HCT116 (cell line): ENCODE measurements at regions of chr10 and their contacts with region 1.

Region 1: DNA sequence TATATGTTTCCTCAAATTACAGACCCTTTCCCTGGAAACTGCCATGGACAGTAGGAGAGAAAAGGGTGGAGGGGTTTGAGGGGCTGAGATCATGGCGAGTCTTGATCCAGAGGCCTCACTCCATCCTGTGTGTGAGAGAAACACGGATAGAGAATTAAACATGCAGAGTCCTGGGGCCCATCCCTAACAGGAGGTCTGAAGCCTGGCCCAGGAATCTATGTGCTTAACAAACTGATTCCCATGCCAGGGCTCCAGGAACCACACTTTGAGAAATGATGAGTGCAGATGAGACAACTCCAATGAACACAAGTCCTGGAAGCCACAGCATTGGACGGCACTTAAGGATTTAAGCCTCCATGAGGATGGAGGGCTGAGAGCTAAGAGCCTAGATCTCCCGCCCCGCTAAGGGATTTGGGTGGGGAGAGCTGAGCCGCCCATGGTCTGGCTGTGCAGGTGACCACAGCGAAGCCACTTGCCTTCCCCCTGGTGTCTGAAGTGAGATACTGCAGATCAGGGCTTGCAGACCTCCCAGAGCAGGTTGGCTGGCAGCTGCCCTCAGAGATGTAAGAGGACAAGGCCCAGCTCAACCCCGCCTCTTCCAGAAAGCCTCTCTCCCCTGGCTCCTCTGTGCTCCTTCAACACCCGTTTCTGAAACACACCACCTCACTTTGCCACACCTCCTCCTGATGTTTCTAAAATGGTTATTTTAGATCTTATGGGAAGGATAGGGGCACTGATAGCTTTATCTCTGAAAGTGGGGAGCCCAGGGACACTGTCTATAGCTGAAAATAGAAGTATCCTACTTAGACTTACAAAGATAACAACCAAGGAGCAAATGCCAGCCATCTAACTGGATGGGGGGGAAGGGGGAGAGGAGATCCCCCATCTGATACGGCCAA is 24.8 kb upstream of the EIF5AL1 start:
- DNase-seq: peak; percentile 81
- ATAC-seq: peak; percentile 90
- H3K4me3 ChIP-seq: peak overlapping the region in 1 of 2 experiments; percentile 37; a peak in 2 of 4 replicates
- H3K27ac ChIP-seq: peak overlapping the region; percentile 47
- H3K4me1 ChIP-seq: peaks cover 26 to 40% of the 10 kb centered on the region in 2 experiments
- H3K27me3 ChIP-seq: no peaks in the 10 kb centered on the region
- CTCF ChIP-seq: peak; percentile 81 to 86 (median 84)
- POLR2A ChIP-seq: no peak
- RAD21 ChIP-seq: peak; percentile 77

Region 2: GRCh38 chr10:79298403-79299244 is 188.9 kb before region 1 on chr10:
- CTCF ChIA-PET with region 1: no interaction called
- POLR2A ChIA-PET with region 1: no interaction called
- RAD21 ChIA-PET with region 1: no interaction called
- intact Hi-C with region 1: loop called (anchors 5 kb)
- DNase-seq: peak; percentile 53
- ATAC-seq: peak; percentile 84
- H3K4me3 ChIP-seq: peak overlapping the region in 1 of 2 experiments; percentile 35; a peak in 2 of 4 replicates
- H3K27ac ChIP-seq: peak overlapping the region; percentile 38
- H3K4me1 ChIP-seq: peaks cover 18 to 39% of the 10 kb centered on the region in 2 experiments
- H3K27me3 ChIP-seq: no peaks in the 10 kb centered on the region
- CTCF ChIP-seq: no peak
- POLR2A ChIP-seq: no peak
- RAD21 ChIP-seq: no peak

Region 3: DNA sequence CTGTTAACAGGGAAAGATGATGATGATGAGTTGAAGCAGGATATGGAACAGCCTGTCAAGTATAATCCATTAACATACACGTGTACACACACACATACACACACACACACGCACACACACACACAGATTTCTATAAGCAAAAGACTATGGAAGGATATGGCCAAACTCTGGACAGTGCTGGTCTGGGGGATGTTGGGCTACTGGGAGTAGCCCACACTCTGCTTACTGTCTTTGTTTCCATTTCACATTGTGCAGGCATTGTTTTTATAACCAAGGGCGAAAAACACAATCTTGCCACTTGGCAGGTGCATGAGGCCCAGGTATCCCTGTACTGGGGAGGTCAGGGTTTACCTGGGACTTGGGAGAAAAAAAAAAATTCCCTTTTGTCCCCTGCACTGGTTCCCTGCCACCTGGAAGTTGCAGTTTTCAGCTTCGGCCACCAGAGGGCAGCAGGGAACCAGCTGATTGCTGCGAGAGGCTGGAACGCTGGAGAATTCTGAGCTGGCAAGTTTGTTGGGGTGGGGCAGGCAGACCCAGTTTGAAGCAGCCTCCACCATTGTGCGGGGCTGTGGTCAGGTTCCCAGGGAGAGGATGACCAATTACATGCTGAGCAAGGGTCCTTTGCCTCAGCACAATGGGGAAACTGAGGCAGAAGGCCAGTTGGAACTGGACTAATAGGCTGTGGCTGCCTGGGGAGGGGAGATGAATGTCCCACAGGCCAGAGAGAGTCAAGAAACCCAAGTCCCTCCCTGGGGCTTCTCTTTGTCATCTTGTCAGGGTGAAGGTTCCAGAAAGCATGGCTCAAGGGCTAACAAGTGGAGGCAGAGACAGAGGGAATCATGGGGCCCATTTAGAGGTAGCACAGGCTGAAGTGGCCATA is 113.0 kb before region 1 on chr10:
- CTCF ChIA-PET with region 1: interaction called, 77 read pairs
- POLR2A ChIA-PET with region 1: interaction called, 4 read pairs
- RAD21 ChIA-PET with region 1: interaction called, 12 to 16 read pairs
- intact Hi-C with region 1: loop called (anchors 1 kb)
- DNase-seq: peak; percentile 40
- ATAC-seq: peak; percentile 87
- H3K4me3 ChIP-seq: no peak overlapping the region
- H3K27ac ChIP-seq: no peak overlapping the region
- H3K4me1 ChIP-seq: peaks cover 3 to 10% of the 10 kb centered on the region in 2 experiments; a peak in 2 of 4 replicates
- H3K27me3 ChIP-seq: no peaks in the 10 kb centered on the region
- CTCF ChIP-seq: peak; percentile 89 to 92 (median 89)
- POLR2A ChIP-seq: no peak
- RAD21 ChIP-seq: peak; percentile 98

Region 4: DNA sequence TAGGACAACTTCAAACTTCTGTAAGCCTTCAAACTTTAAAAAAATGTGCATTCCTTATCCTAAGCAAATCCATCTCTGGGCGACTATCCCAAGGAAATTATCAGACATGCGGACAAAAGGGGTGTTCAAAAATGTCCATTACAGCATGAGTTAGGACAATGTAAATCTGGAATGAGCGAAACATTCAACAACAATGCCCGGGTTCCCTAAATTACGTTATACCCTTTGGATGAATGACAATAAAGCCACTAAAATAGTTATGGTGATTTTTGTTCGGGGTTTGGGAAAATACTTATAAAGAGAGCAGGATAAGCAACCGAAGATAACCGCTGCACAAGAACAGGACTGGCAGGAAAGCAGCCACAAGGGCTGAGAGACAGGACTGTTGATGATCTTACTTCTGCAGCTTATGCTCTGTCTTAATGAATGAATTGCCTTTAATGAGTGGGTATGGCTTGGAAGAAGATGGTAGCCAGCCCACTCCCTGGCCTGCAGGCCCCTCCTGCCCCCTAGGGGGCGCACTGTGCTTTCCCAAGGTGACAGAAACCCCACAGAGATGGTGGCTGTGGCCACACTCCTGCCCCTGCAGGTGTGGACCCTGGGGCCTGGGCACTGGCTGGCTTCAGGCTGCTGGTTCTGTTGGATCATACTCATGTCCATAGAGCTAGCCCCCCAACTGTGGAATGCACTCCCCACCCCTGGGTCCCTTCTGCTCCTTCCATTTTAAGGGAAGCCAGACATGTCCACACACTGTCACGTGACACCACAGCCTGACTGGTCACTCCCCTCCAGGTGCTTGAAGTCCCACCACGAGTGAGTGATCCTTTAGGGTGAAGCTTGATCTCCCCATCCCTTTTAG is 87.2 kb before region 1 on chr10:
- CTCF ChIA-PET with region 1: interaction called, 12 read pairs
- POLR2A ChIA-PET with region 1: no interaction called
- RAD21 ChIA-PET with region 1: no interaction called
- intact Hi-C with region 1: loop called (anchors 1 kb)
- DNase-seq: peak; percentile 8
- ATAC-seq: peak; percentile 91
- H3K4me3 ChIP-seq: no peak overlapping the region
- H3K27ac ChIP-seq: no peak overlapping the region
- H3K4me1 ChIP-seq: peaks cover 0 to 6% of the 10 kb centered on the region in 2 experiments; a peak in 1 of 4 replicates
- H3K27me3 ChIP-seq: no peaks in the 10 kb centered on the region
- CTCF ChIP-seq: peak; percentile 80 to 95 (median 90)
- POLR2A ChIP-seq: no peak
- RAD21 ChIP-seq: peak; percentile 79

Region 5: DNA sequence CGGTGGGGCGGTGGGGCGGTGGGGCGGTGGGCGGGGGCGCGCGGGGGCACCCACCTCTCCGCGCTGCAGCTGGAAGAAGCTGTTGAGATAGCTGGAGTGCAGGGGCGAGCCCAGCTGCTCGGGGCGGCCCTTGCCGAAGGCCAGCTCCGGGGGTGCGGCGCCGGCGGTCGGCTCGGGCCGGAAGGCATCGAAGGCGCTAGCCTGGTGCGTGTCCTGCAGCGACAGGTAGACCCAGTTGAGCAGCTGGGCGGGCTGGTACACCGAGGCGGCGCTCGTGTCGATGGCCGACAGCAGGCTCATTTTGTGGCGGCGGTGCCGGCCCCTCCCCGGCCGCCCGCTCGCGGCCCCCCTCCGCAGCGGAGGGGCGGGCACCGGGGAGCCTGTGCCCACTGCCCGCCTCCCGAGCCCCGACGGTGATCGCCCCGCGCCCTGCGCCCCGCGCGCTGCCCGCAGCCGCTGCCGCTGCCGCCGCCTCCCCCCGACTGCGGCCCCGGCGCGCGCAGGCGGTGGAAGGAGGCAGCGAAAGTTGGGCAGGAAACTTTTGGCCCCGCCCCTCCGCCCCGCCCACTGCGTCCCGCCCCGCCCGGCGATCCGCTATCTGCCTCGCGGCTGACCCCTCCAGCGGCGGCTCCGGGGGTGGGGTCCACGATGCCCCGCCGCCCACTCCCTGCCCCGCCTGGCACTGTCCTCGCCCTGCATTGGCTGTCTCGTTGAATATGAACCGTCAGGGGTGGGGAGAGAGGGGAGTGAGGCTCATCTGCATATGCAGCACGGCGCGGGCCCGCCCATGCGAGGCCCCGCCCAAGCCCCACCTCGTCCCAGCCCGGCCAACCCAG is 42.2 kb before region 1 on chr10 and contains the start of gene ZCCHC24:
- CTCF ChIA-PET with region 1: no interaction called
- POLR2A ChIA-PET with region 1: interaction called, 3 read pairs
- RAD21 ChIA-PET with region 1: interaction called in 1 of 2 experiments, 3 read pairs
- intact Hi-C with region 1: loop called (anchors 1 kb)
- DNase-seq: peak; percentile 92
- ATAC-seq: peak; percentile 91
- H3K4me3 ChIP-seq: peak within 1 kb of the TSS; percentile 58 to 68
- H3K27ac ChIP-seq: peak within 1 kb of the TSS; percentile 50; the same call in 1 of the 2 replicates
- H3K4me1 ChIP-seq: peaks cover 17 to 50% of the 10 kb centered on the region in 2 experiments
- H3K27me3 ChIP-seq: no peaks in the 10 kb centered on the region
- CTCF ChIP-seq: no peak
- POLR2A ChIP-seq: peak; percentile 74
- RAD21 ChIP-seq: no peak
- total RNA-seq, gene ZCCHC24: 7.0 TPM

Region 6: GRCh38 chr10:79507440-79508167 is 20.1 kb after region 1 on chr10:
- CTCF ChIA-PET with region 1: no interaction called
- POLR2A ChIA-PET with region 1: no interaction called
- RAD21 ChIA-PET with region 1: no interaction called
- intact Hi-C with region 1: no loop called
- DNase-seq: no peak
- ATAC-seq: no peak
- H3K4me3 ChIP-seq: no peak overlapping the region
- H3K27ac ChIP-seq: no peak overlapping the region
- H3K4me1 ChIP-seq: no peaks in the 10 kb centered on the region; a peak in 1 of 4 replicates
- H3K27me3 ChIP-seq: peaks cover 24% of the 10 kb centered on the region; the same call in 1 of the 2 replicates
- CTCF ChIP-seq: no peak
- POLR2A ChIP-seq: no peak
- RAD21 ChIP-seq: no peak

Region 7: DNA sequence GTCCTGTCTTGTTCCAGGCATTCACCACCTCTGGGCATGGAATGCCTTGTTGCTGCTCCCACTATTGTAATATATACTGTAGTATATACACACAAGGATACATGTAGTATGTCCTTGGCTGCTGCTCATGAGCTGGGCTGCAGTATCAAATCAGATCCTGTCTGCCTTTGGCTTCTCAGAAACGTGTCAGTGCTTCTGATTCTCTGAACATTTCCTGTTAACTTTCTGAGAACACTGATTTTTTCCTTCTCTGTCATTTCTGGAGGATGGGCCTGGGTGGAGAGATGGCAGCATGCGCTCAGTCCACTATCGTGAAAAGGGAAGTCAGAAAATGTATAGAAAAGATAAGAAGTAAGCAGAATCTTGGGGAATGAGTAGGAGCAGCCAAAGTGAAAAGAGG is 60.4 kb after region 1 on chr10:
- CTCF ChIA-PET with region 1: no interaction called
- POLR2A ChIA-PET with region 1: no interaction called
- RAD21 ChIA-PET with region 1: no interaction called
- intact Hi-C with region 1: no loop called
- DNase-seq: no peak
- ATAC-seq: no peak
- H3K4me3 ChIP-seq: no peak overlapping the region
- H3K27ac ChIP-seq: no peak overlapping the region
- H3K4me1 ChIP-seq: no peaks in the 10 kb centered on the region
- H3K27me3 ChIP-seq: 0 out of 2 replicates have a peak, but pooled peaks cover 4% of the 10 kb centered on the region
- CTCF ChIP-seq: no peak
- POLR2A ChIP-seq: no peak
- RAD21 ChIP-seq: no peak